ENCODE measurements at regions of chr10 and their contacts with region 1.

Region 1: DNA sequence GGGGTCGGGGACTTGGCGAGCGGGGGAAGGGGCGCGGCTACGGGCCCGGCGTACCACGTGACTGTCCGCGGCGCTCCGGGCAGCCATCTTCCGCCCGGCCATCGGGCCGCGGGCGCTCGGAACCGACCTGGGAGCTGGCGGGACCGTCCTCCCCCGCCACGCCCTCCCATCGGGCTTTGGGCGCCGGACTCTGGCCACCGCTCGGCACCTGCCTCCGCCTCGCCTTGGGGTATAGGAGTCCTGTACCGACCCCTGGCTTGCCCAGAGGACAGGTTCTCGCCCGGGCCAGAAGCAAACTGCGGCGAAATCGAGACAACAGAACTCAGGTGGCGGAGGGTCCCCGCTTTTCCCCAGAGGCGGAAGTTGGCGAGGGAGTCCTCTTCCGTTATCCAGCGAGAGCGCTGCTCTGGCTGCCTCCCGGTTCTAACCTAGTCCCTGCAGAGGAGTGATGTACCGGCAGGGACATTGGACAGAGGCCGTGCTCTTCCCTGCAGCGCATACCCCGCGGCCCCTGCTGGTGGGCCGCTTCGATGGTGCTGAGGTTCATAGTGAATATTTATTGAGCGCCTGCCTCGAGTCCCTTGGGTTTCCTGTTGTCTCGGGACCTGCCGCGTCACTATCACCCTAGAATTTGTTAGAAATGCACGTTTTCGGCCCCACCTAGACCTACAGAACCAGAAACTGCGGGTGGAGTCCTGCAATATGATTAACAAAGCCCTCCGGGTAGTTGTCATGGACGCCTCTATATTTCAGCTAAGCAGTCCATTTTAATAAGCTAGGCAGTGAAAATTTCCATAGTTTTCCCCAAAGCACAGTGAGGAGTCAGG is 1.3 kb upstream of the SGMS1 start:
- DNase-seq: peak; percentile 91
- ATAC-seq: peak; percentile 77

Region 2: GRCh38 chr10:50291261-50291850 is 333.7 kb before region 1 on chr10:
- intact Hi-C with region 1: loop called (anchors 2 kb)
- DNase-seq: no peak
- ATAC-seq: peak; percentile 60

Region 3: GRCh38 chr10:50325449-50326171 is 299.5 kb before region 1 on chr10:
- intact Hi-C with region 1: loop called (anchors 2 kb)
- DNase-seq: peak; percentile 59
- ATAC-seq: peak; percentile 64

Region 4: DNA sequence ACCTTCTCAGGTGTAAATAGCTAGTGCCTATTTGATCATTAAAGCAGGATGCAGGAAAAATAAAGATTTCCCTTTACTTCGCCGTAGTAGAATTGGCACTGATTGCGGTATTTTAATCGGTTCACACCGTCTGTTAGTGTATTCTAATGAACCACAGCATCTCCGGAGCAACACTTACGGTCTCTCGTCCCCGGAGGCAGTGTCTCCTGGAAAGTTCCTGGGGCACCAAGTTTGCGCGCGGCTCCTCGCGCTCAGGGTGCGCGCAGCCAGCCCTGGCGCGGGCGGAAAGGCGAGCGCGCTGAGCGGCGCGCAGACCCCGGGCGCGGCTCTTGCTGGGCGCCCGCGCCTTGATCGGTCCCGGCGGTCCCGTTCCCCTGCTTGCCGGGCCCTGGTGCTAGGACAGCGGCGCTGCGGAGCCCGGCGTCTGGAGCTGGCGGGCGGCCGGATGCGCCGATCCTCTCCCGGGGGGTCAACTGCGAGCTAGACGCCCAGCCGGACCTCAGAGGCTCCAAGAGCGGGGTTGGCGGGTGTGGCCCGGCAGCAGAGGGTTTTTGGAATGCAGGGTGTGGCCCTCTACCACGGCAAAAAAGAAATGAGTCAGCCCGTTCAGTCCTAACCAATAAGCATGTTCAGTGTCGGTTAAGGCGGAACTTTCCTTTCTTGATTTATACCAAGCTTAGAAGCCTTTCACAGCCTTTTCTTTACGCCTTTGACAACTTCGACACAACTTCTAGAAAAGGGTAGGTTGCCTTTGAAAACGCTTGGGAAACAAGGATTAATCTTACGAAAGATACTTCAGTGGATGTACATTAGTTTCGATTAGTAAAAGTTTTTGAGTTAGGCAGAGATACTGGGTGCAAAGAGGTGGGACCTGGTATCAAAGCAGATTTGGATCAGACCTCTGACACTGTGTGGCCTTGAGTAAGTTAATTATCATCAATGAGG is 206.9 kb before region 1 on chr10:
- intact Hi-C with region 1: loop called (anchors 2 kb)
- DNase-seq: peak; percentile 88
- ATAC-seq: peak; percentile 92

Region 5: DNA sequence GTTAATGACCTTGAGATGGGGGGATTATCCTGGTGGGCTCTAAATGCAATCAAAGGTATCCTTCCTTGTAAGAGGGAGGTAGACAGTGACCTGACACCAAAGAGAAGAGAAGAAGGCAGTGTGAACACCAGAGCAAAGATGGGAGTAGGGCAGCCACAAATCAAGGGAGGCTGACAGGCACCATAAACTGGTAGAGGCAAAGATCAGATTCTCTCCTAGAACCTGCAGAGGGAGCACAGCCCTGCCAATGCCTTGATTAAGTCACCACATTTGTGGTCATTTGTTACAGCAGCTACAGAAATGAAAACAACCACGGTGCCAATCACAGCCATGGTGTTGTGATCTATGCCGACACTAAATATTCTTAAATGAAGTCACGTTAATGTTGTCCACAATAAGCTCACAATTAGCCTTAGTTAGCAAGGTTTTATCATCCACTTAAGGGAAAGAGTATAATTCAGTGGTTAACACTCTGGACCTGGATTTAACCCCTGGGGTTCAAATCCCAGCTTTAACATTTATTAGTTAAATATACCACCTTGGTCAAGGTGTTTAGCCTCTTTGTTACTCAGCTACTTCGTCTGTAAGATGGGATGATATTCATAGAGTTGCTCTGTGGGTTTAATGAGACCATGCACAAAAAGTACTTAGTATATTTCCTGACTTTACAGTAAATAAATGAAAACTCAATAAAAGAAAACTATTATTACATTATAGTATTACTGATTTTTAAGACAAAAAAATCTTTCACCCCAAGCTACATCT is 72.1 kb before region 1 on chr10:
- intact Hi-C with region 1: loop called (anchors 2 kb)
- DNase-seq: no peak
- ATAC-seq: no peak

Region 6: DNA sequence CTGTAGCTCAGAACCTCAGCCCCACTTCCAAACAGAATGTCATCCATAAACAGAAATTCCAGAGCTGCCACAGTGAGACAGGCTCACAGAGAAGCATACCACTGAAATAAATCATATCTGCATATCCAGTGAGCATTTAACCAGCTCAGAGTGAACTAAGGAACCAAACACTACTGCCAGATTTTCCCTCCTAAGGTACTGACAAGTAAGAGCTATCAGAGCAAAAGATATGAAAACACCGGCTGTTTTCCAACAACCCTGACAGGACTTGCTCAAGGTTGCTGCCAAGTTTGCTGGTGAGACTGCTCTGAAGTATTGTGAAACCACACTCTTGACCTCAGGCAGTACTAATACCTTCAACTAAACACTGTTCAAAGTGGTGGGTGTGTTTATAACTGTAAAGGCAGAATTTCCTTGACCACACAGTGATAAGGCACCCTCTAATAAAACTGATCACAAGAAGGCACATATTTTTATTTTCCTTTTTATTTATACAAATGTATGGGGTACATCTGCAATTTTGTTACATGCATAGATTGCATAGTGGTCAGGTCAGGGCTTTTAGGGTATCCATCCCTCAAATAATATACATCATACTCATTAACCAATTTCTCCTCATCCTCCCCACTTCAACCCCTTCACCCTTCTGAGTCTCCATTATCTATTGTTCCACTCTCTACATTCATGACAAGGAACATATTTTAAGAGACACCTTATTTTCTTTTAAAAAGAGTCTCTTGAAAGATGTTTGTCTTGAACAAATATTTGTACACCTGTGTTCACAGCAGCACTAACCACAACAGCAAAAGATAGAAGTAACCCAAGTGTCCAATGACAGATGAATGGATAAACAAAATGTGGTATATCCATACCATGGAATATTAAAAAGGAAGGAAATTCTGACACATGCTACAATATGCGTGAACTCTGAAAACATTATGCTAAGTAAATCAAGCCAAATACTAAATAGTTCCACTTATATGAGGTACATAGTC is 19.5 kb before region 1 on chr10:
- intact Hi-C with region 1: loop called (anchors 2 kb)
- DNase-seq: no peak
- ATAC-seq: peak; percentile 92

Region 7: DNA sequence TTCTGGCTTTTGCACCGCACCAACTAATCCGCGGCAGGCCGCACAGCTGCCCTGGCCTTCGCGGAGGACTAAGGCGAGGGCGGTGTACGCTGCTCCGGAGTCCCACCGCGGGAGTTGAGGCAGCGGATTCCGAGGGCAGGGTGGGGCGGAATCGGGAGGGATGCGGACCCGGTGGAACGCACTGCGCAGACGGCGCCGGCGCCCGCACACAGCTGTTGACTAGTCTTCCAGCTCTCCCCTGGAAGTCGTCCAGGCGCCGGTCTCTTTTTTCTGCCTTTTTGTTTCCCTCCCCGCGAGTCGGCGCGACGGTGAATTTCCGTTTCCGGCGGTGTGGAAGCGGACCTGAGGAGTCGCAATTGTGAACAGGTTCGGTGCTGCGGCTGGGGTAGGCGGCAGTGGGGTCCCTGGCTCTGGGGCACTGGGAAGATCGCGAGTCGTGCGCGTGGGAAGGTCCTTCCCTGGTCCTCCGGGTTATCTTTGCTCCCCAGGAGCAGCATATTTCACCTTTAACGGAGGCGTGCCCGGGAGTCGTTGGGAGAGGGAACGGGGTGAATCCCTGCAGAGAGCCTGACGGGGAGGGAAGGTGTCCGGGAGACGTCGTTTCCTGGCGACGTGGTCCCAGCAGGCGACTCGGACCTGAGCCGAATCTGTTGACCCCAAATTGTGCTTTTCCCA is 114.7 kb after region 1 on chr10 and contains the start of gene ASAH2B:
- intact Hi-C with region 1: no loop called
- DNase-seq: peak; percentile 84
- ATAC-seq: peak; percentile 78
- total RNA-seq, gene ASAH2B: 3.4 TPM

Measured in Right ventricle myocardium inferior (tissue), 1 donor.